B cell (primary cell): ENCODE measurements at regions of chr2 and their contacts with region 1.

Region 1: DNA sequence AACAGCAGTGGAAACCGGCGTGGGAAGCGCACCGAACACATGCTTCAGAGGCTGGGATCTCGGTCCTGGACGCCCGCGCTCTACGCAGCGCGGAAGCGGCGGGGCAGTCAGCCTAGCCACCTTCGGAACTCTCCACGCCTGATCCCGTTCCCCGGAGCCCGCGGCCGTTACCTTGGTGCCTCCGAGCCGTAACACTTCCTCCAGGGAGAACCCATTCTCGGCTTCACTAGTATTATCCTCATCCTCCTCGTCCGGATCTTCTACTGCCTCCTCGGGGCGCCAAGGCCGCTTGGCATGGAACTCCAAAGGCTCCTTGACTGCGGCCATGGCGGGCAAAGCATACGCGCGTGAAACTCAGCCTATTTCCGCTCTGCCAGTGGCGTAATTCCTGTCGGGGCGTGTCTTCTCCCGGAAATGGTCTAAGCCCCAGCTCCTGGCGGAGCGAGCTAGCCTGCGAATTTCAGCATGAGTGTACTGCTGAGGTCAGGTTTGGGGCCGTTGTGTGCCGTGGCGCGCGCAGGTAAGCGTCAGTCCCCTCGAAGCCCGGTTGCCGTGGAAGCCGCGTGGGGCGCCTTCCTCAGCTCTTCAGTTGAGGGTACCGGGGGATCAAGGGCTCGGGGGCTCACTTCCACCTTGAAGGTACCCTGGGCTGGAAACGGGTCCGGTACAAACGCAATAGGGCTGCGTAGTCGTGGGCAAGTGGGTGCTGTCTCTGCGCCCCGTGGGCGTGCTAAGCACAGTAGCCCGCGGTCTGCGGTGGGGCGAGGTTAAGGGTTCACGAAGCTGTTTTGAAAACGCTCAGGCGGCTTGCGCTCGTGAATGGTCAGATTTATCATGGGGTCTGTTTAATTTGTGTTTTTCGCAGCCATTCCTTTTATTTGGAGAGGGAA is at the starts of genes CEBPZ and NDUFAF7:
- DNase-seq: peak; percentile 90
- ATAC-seq: peak; percentile 92
- H3K4me3 ChIP-seq: peak within 1 kb of the TSS; percentile 76 to 95 (median 91)
- H3K4me3 Mint-ChIP-seq: no peak within 1 kb of the TSS
- H3K27ac ChIP-seq: peak within 1 kb of the TSS; percentile 85 to 90
- H3K27ac Mint-ChIP-seq: no peak within 1 kb of the TSS
- H3K4me1 ChIP-seq: peaks cover 26 to 28% of the 10 kb centered on the region in 2 donors
- H3K4me1 Mint-ChIP-seq: peaks cover 18% of the 10 kb centered on the region
- H3K27me3 ChIP-seq: no peaks in the 10 kb centered on the region
- H3K27me3 Mint-ChIP-seq: no peaks in the 10 kb centered on the region
- CTCF ChIP-seq: no peak
- total RNA-seq, gene CEBPZ: 43.9 and 56.5 TPM in 2 replicates
- total RNA-seq, gene NDUFAF7: 35.4 and 42.0 TPM in 2 replicates

Region 2: GRCh38 chr2:37196320-37197195 is 34.9 kb before region 1 on chr2 and contains the start of gene CEBPZOS:
- CTCF ChIA-PET with region 1: no interaction called
- POLR2A ChIA-PET with region 1: interaction called, 4 read pairs
- intact Hi-C with region 1: loop called (anchors 1 kb)
- DNase-seq: peak; percentile 94
- ATAC-seq: peak; percentile 89
- H3K4me3 ChIP-seq: peak within 1 kb of the TSS; percentile 70 to 87 (median 80)
- H3K4me3 Mint-ChIP-seq: peak within 1 kb of the TSS; percentile 98
- H3K27ac ChIP-seq: peak within 1 kb of the TSS; percentile 78 to 81
- H3K27ac Mint-ChIP-seq: peak within 1 kb of the TSS; percentile 99
- H3K4me1 ChIP-seq: peaks cover 16 to 24% of the 10 kb centered on the region in 2 donors
- H3K4me1 Mint-ChIP-seq: peaks cover 22% of the 10 kb centered on the region
- H3K27me3 ChIP-seq: no peaks in the 10 kb centered on the region
- H3K27me3 Mint-ChIP-seq: no peaks in the 10 kb centered on the region
- CTCF ChIP-seq: no peak
- total RNA-seq, gene CEBPZOS: 36.7 and 38.0 TPM in 2 replicates

Region 3: DNA sequence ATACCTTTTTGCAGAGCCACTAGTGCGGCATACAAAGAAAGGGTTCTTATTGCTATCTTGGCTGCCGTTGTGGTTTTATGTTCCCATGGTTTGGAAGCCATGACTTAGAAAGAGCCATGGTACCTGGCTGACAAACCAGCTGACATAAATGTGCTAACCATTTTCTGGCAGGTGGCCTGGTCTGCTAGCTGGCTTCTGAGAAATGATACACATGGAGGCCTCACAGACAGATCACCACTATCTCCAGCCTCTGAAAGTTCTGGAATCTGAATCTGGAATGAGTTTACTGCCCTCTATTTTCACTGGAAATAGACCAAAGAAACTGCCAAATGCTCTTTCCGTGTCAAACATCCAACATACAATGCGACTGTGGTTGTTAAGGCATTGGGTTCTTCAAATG is 236.7 kb after region 1 on chr2:
- CTCF ChIA-PET with region 1: no interaction called
- POLR2A ChIA-PET with region 1: no interaction called
- intact Hi-C with region 1: no loop called
- DNase-seq: no peak
- ATAC-seq: no peak
- H3K4me3 ChIP-seq: no peak overlapping the region
- H3K4me3 Mint-ChIP-seq: no peak overlapping the region
- H3K27ac ChIP-seq: no peak overlapping the region
- H3K27ac Mint-ChIP-seq: no peak overlapping the region
- H3K4me1 ChIP-seq: no peaks in the 10 kb centered on the region
- H3K4me1 Mint-ChIP-seq: no peaks in the 10 kb centered on the region
- H3K27me3 ChIP-seq: no peaks in the 10 kb centered on the region
- H3K27me3 Mint-ChIP-seq: peaks cover 3% of the 10 kb centered on the region
- CTCF ChIP-seq: no peak